ENCODE measurements at regions of chr3 and their contacts with region 1.

Region 1: DNA sequence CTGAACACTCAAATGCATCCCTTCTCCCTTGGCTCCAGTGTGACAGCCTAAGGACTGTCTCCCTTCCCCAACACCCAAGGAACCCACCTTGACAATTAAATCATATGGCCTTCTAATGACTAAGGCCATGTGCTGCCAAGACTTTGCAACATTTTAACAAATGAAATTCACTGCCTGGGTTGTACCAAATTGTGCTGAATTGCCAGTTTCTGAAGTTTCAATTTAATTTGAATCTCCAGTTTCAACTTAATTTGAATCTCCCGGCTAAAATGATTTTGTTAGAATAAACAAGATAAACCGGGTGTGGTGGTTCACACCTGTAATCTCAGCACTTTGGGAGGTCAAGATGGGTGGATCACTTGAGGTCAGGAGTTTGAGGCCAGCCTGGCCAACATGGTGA is 72.4 kb upstream of the RAP2B start:
- DNase-seq: no peak
- H3K4me3 ChIP-seq: no peak overlapping the region
- H3K27ac ChIP-seq: no peak overlapping the region
- H3K4me1 ChIP-seq: peaks cover 8% of the 10 kb centered on the region
- H3K27me3 ChIP-seq: no peaks in the 10 kb centered on the region
- CTCF ChIP-seq: no peak

Region 2: DNA sequence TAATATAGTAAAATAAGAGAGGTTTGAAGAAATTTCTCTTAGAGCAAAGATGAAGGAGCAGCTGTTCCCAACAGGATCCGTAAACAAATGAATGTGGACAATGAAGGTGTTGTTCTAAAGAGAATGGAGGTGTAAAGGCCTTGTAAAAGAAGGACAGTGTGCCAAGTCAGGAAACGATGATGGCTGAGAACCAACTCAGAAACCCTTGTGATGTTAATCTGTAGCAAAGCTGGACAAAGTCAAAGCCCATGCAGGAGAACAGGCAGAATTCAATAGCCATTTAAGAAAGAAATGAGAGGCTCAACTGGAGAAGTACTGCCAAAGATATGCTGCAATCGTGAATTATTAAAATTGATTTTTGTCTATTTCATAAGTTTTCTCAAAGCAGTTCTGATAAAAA is 628.7 kb before region 1 on chr3:
- CTCF ChIA-PET with region 1: no interaction called
- POLR2A ChIA-PET with region 1: interaction called, 11 read pairs
- intact Hi-C with region 1: no loop called
- DNase-seq: no peak
- H3K4me3 ChIP-seq: no peak overlapping the region
- H3K27ac ChIP-seq: no peak overlapping the region
- H3K4me1 ChIP-seq: peaks cover 14% of the 10 kb centered on the region
- H3K27me3 ChIP-seq: no peaks in the 10 kb centered on the region
- CTCF ChIP-seq: no peak

Region 3: DNA sequence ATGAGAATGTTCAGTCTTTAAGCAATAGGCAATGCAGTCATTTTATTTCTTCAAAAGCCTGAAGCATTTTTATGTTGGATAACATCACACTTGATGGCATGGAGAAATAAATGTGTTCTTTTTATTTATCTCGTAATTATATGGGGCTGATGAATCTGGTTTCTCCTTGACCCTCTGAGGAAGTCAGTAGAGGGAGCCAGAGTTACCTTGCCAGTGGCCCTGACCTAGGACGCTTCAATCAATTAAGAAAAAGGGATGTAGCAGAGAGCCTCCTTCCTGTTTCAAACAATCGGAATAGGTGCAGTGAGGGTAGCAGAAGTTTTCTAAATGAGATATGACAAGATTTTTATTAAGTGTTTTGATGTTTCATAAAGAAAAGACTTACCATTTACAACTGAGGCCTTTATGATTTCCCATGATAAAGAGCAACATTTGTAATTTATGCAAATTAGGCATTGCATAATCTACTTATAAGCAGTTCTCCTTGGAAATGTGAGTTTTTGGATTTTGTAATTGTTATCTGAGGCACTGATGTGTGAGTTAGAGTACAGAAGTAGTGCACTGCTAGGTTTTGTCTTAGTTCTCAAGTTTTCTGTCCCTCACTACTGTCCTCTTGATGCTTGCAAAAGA is 201.6 kb after region 1 on chr3:
- CTCF ChIA-PET with region 1: no interaction called
- POLR2A ChIA-PET with region 1: no interaction called
- intact Hi-C with region 1: no loop called
- DNase-seq: peak; percentile 28
- H3K4me3 ChIP-seq: no peak overlapping the region
- H3K27ac ChIP-seq: no peak overlapping the region
- H3K4me1 ChIP-seq: peaks cover 21% of the 10 kb centered on the region
- H3K27me3 ChIP-seq: no peaks in the 10 kb centered on the region
- CTCF ChIP-seq: peak; percentile 57

Measured in A673 (cell line).